Activated naive CD4-positive, alpha-beta T cell treated with anti-CD3 and anti-CD28 coated beads, Interleukin-2, amount 10 ng/mL, durations not matched to agents 7 days and 5 days (primary cell): ENCODE measurements at regions of chr3 and their contacts with region 1.

Region 1: GRCh38 chr3:27312044-27312668 is 57.0 kb downstream of the NEK10 start:
- DNase-seq: no peak
- H3K4me3 Mint-ChIP-seq: no peak overlapping the region
- H3K27ac Mint-ChIP-seq: no peak overlapping the region
- H3K4me1 Mint-ChIP-seq: no peaks in the 10 kb centered on the region
- H3K27me3 Mint-ChIP-seq: peaks cover 10% of the 10 kb centered on the region

Region 2: DNA sequence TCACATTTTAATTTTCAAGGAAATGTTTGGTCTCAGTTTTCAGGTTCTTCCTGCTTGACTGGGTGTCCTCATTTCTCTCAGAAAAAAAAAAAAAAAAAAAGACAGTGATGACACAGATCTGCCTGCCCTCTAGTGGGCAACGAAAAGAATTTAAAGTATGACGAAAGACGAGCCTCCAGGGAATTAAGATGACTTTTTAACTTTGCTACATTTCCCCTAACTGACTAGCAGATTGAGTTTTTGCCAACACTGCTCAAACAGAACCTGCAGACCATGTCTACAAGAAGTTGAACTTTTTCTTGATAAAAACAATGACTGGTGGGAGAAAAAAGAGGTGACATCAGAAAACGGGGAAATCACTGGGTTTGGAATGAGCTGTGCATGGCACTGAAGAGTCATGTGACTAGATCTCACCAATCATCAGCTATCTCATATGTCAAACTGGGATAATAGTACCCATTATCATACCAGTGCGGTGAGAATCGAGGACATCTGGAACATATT is 369.1 kb after region 1 on chr3:
- CTCF ChIA-PET with region 1: interaction called, 21 read pairs
- DNase-seq: peak; percentile 36
- H3K4me3 Mint-ChIP-seq: peak overlapping the region; percentile 49
- H3K27ac Mint-ChIP-seq: no peak overlapping the region
- H3K4me1 Mint-ChIP-seq: peaks cover 9% of the 10 kb centered on the region
- H3K27me3 Mint-ChIP-seq: peaks cover 14% of the 10 kb centered on the region